Gastrocnemius medialis (tissue), 4 donors: ENCODE measurements at regions of chr13 and their contacts with region 1.

Region 1: GRCh38 chr13:49996951-49997895 is at the start of gene TRIM13:
- DNase-seq: peak; percentile 81 to 91
- ATAC-seq: peak; percentile 87 to 88
- H3K4me3 ChIP-seq: peak within 1 kb of the TSS; percentile 94 to 97 (median 96)
- H3K27ac ChIP-seq: peak within 1 kb of the TSS; percentile 99 to 100 (median 99)
- H3K4me1 ChIP-seq: peaks cover 46 to 47% of the 10 kb centered on the region in 2 donors
- H3K27me3 ChIP-seq: no peaks in the 10 kb centered on the region
- CTCF ChIP-seq: peak; percentile 59 to 81 (median 70)
- POLR2A ChIP-seq: peak; percentile 75 to 89
- total RNA-seq, gene TRIM13: 11.4 to 21.5 (median 19.1) TPM

Region 2: DNA sequence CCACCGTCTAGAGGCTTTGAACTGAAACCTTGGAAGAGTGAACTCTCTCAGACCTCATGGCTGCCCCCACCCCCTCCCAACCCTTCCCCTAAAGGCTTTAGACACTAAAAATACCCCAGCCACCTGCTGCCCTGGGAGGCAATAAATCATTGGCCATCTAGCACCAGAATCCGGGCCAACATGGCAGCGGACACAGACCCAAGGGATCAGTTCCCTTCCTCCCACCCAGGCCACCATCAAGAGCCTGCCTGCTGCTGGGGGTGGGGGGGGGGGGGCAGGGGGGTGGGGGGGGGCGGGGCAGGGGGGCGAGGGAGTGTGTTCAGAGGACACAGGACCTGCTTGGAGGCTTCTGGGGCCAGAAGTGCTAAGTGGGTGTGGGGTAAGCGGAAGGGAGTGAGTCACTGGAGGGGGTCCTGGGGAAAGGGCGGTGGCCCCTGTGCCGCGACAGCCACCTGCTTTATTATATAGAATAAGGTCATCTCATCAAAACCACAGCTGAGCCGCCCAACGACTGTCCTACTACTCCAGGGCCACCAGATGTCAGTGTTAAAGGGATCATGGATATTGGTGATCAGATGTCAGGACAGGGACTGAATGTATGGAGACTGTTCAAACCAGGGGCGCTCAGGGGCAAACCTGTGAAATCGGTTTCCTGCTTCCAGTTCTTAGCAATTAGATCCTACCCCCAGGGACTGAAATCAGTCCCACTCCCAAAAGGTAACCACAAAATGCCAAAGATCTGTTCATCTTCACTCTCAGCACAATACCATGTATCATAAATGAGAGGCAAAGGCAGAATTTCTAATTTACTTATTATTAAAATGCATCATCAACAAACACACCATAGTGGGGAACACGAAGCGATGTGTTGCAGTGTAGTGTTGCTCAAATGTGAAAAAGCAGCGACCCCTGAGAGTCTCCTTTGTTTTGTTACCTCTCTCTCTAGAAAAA is 344.6 kb before region 1 on chr13:
- in situ Hi-C with region 1: no loop called
- intact Hi-C with region 1: loop called (anchors 5 kb)
- DNase-seq: peak; percentile 87 to 95
- ATAC-seq: peak; percentile 59 to 71
- H3K4me3 ChIP-seq: peak overlapping the region in 3 of 4 donors; percentile 25 to 38 (median 30)
- H3K27ac ChIP-seq: peak overlapping the region; percentile 95 to 98 (median 96)
- H3K4me1 ChIP-seq: peaks cover 80 to 81% of the 10 kb centered on the region in 2 donors
- H3K27me3 ChIP-seq: no peaks in the 10 kb centered on the region
- CTCF ChIP-seq: peak; percentile 61 to 78 (median 71)
- POLR2A ChIP-seq: no peak

Region 3: DNA sequence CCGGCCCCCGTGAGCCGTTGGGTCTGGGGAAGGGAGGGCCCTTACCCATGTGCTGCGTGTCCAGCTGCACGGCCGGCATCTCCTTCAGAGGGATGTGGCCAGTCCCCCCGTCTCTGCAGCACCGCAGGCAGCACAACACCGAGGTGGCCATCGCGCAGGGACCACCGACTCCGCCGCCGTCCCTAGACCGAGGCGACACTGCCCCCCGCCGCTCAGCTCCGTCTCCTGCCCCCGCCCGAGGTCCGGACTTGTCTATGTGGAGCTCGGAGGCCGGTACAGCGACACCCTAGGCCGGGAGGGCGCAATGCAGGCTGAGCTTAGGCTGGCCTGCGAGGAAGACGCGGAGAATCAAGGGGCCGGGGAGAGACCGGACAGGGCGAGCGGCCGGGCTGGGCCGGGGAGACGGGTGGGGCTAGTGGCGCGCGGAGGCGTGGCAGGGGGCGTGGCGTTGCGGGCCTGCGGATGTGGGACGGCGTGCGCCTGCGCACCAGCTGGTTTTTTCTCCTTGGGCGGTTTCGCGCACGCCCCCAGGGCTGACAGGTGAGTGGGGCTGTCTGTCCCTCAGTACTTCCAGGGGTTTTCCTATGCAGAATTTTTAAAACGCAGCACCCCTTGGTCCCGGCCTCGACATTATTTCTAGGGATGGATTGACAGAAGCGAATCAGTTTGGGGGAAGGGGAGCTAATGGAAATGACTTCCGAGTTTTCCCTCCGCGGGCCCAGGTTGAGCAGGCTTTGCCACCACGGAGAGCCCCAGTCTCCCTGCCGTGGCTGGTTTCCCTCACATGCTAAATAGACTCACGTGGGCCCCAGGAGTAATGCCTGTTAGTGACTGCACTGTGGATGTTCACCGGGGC is 60.9 kb before region 1 on chr13 and contains the start of gene SPRYD7:
- in situ Hi-C with region 1: no loop called
- intact Hi-C with region 1: loop called (anchors 2 kb)
- DNase-seq: peak; percentile 96 to 98
- ATAC-seq: peak; percentile 92 to 93
- H3K4me3 ChIP-seq: peak within 1 kb of the TSS; percentile 80 to 98 (median 88)
- H3K27ac ChIP-seq: peak within 1 kb of the TSS; percentile 87 to 95 (median 92)
- H3K4me1 ChIP-seq: peaks cover 49 to 54% of the 10 kb centered on the region in 2 donors
- H3K27me3 ChIP-seq: no peaks in the 10 kb centered on the region
- CTCF ChIP-seq: peak; percentile 88 to 95 (median 93)
- POLR2A ChIP-seq: peak; percentile 77 to 83
- total RNA-seq, gene SPRYD7: 9.8 to 24.7 (median 17.9) TPM

Region 4: DNA sequence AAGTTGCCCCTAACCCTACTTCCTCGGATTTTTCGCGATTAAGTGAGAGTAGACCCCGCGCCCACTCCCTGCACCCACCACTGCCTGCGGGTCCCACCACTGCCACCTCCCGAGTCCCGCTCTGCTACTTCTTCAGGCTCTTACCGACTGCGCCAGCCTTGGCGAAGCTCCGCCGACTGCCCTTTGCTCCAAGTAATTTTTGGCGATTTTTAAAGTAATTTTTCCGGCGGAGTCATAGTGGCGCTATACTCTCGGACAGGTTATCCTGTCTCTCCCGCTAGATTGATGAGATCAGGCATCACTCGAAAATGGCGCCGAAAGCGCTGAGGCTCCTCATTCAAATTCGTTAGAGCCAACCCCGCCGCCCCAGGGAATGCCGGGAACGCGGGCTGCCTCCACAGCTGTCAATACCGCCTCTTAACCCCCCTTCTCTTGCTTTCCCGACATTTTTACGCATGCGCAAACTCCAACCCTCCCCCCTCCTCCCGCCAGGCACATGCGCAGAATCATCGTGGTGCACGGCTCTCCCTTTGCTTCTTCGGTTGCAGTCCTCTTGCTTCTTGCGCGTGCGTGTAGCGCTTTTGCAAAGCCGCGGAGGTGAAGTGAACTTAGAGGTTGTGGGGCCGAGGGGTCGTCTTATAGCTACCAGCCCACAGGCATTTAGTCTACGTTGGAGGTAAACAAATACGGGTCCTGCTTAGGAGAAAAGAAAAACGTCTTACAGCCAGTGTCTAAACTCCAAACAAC is 84.6 kb after region 1 on chr13:
- in situ Hi-C with region 1: loop called in 2 of 4 experiments (anchors 10 kb)
- intact Hi-C with region 1: loop called (anchors 1 kb)
- DNase-seq: peak; percentile 97 to 98
- ATAC-seq: peak; percentile 96
- H3K4me3 ChIP-seq: peak overlapping the region; percentile 68 to 88 (median 80)
- H3K27ac ChIP-seq: peak overlapping the region; percentile 85 to 90 (median 87)
- H3K4me1 ChIP-seq: peaks cover 57 to 65% of the 10 kb centered on the region in 2 donors
- H3K27me3 ChIP-seq: no peaks in the 10 kb centered on the region
- CTCF ChIP-seq: peak in 2 of 5 experiments; percentile 10 to 19
- POLR2A ChIP-seq: peak; percentile 25 to 63

Region 5: DNA sequence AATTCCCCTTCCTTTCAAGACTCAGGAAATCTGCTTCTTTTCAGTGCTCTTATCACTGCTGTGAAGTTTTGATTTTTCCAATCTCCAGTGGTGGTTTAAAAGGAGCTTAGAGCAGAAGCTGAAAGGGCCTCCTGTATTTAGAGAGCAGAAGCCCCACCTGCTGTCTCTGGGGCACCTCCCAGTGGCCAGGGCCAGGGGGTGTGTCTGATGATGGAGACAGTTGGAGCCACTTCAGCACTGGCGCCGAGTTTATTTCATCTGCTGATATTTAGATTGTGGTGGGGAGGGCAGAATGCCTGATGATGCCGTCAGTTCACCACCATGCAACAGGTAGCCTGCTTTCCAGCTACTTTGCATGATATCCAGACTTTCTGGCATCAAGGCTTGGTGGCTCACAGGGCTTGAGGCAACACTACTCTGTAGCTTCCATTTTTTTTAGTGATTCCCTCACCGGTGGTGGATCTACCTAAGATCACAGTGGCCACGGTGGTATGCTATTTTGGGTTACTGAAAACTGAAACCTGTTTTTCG is 389.9 kb after region 1 on chr13:
- in situ Hi-C with region 1: loop called in 1 of 4 experiments (anchors 25 kb)
- intact Hi-C with region 1: no loop called
- DNase-seq: peak; percentile 76 to 89
- ATAC-seq: peak; percentile 86 to 90
- H3K4me3 ChIP-seq: peak overlapping the region; percentile 46 to 55 (median 46)
- H3K27ac ChIP-seq: peak overlapping the region; percentile 91 to 96 (median 91)
- H3K4me1 ChIP-seq: peaks cover 18 to 33% of the 10 kb centered on the region in 2 donors
- H3K27me3 ChIP-seq: no peaks in the 10 kb centered on the region
- CTCF ChIP-seq: peak in 3 of 5 experiments; percentile 4 to 38 (median 24)
- POLR2A ChIP-seq: peak; percentile 49 to 78

Region 6: DNA sequence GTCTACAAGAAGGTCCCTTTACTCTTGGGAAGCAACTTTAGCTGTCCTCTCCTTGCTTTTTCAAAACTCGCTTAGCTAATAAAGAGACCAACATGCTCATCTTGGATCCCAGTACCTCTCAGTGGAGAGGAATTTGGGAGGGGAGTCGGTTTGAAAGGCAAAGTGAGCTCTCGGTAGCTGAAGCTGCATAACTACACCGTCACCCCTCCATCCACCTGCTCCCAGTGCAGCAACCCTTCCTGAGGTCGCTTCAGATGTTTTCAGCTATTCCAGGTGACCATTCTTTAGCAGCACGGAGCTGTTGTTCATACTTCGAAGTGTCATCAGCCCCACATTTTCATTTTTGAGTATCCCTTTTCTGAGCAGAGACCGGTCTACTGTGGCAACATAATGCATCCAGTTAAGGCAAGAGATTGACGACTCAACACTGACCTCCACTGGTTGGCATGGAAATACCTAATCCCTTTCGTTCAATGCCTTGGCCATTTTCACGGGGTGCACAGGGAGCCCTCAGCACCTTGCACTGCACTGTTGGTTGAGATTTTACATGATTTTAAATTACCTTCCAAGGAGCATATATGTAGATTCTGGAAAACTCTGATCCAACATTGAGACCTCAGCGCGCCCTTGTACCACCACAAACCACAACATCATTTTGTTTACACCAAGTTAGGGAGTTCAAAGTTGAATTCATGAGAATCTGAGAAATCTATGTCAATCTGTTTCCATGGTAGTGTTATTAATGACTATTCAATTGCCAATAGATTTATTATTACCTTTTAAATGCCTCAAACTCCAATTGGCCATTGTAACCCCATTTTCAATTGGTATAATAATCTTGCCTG is 804.1 kb after region 1 on chr13:
- in situ Hi-C with region 1: loop called in 1 of 4 experiments (anchors 25 kb)
- intact Hi-C with region 1: no loop called
- DNase-seq: peak; percentile 6 to 20
- ATAC-seq: peak; percentile 75 to 95
- H3K4me3 ChIP-seq: no peak overlapping the region
- H3K27ac ChIP-seq: no peak overlapping the region
- H3K4me1 ChIP-seq: peaks cover 5 to 15% of the 10 kb centered on the region in 2 donors
- H3K27me3 ChIP-seq: no peaks in the 10 kb centered on the region
- CTCF ChIP-seq: peak; percentile 39 to 69 (median 64)
- POLR2A ChIP-seq: no peak

Region 7: DNA sequence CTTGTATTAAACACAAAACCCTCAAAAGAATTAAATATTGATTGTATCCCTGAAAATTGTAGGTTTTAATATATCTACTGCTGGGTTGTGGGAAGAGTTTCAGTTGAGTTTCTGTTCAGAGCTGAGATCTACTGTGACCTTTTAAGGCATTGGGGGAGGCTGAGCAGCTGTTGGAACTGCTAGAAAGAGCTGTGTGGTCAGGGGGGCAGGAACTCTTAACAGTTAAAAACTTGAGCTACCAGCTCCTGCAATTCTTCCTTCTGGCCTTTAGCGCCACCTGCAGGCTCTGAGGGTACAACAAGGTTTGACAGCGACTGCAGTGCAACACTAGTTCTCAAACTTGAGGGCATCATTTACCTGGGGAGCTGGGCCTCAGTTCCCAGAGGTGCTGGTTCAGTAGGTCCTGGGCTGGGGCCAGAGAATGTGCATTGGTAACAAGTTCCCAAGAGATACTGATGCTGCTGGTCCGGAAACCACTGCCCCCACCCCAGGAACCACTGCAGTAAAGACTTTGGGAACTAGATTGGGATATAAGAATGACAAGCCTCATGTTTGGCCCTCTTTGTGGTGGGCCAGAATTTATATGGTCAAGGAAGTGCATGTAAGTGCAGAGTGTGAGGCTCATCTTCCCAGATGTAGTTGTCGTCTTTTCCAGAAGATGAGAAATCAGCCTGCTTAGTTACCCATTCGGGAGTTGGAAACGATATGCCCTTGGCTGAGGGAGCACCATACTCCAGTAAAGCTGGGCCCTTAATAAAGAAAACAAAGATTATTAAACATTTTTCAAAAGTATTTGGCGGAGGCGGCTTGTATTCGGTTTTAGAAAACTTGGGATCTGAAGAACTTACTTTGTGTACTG is 914.9 kb after region 1 on chr13:
- in situ Hi-C with region 1: loop called in 2 of 4 experiments (anchors 25 kb)
- intact Hi-C with region 1: loop called (anchors 5 kb)
- DNase-seq: peak; percentile 52 to 71
- ATAC-seq: peak; percentile 25 to 43
- H3K4me3 ChIP-seq: no peak overlapping the region
- H3K27ac ChIP-seq: no peak overlapping the region
- H3K4me1 ChIP-seq: peaks cover 14 to 15% of the 10 kb centered on the region in 2 donors
- H3K27me3 ChIP-seq: no peaks in the 10 kb centered on the region
- CTCF ChIP-seq: peak; percentile 49 to 89 (median 71)
- POLR2A ChIP-seq: no peak